ENCODE measurements at regions of chr18 and their contacts with region 1.

Region 1: GRCh38 chr18:35029770-35030169 is 11.4 kb upstream of the MAPRE2 start:
- DNase-seq: no peak
- ATAC-seq: peak; percentile 84
- H3K4me3 Mint-ChIP-seq: peak overlapping the region; percentile 84
- H3K27ac Mint-ChIP-seq: peak overlapping the region; percentile 97
- H3K4me1 Mint-ChIP-seq: peaks cover 41% of the 10 kb centered on the region
- H3K27me3 Mint-ChIP-seq: no peaks in the 10 kb centered on the region
- CTCF ChIP-seq: no peak

Region 2: DNA sequence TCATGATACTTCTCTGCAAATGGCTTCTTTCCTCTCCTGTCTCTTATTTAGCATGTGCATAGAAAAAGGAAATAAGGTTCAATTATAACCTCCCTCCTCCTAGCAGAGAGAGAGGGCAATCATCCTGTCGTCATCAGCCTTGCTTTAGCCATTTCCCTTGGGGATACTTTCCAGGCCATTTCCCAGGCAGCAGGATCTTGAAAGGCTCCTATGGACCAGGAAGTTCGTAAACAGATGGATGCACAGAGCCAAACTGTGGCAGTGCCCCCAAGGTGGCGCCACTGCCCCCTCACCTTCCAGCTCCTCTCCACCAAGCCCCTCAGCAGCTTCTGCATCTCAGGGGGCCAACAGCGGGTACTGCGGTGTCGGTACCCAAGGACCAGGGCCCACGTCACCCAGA is 162.2 kb before region 1 on chr18:
- CTCF ChIA-PET with region 1: no interaction called
- POLR2A ChIA-PET with region 1: no interaction called
- intact Hi-C with region 1: no loop called
- DNase-seq: no peak
- ATAC-seq: no peak
- H3K4me3 Mint-ChIP-seq: no peak overlapping the region
- H3K27ac Mint-ChIP-seq: no peak overlapping the region
- H3K4me1 Mint-ChIP-seq: no peaks in the 10 kb centered on the region
- H3K27me3 Mint-ChIP-seq: peaks cover 3% of the 10 kb centered on the region
- CTCF ChIP-seq: no peak

Region 3: DNA sequence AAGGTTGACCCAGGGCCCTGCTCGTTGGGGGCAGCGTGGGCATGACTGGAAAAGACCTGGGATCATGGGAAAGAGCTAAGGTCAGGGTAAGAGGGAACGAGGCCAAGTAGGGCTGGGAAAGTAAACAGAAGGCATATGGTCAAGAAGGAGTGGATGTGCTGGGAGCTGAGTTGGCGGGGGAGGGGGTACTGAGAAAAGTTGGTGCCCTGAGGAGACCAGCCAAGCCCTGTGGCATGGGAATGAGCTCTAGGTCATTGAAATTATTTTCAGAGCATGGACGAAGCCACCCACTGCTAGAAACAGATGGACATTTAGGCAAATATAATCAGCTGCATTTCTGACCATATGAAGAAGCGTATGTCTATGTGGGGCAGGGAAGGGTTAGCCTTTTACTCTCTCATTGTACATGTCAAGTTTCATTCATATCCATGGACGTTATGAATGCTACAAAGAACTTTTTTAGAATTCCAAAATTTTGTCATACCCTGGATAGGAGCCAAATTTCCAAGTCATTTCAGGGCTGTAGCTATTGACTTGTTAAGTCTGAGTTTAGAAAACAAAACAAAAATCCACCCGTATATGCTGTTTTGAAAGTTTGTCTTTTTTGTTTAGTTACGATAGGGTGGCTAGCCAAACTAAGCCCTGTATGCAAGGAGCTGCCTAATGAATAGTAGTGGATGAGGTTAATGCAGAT is 30.5 kb after region 1 on chr18:
- CTCF ChIA-PET with region 1: interaction called, 12 read pairs
- POLR2A ChIA-PET with region 1: no interaction called
- intact Hi-C with region 1: no loop called
- DNase-seq: no peak
- ATAC-seq: no peak
- H3K4me3 Mint-ChIP-seq: no peak overlapping the region
- H3K27ac Mint-ChIP-seq: no peak overlapping the region
- H3K4me1 Mint-ChIP-seq: peaks cover 46% of the 10 kb centered on the region
- H3K27me3 Mint-ChIP-seq: no peaks in the 10 kb centered on the region
- CTCF ChIP-seq: no peak

Region 4: DNA sequence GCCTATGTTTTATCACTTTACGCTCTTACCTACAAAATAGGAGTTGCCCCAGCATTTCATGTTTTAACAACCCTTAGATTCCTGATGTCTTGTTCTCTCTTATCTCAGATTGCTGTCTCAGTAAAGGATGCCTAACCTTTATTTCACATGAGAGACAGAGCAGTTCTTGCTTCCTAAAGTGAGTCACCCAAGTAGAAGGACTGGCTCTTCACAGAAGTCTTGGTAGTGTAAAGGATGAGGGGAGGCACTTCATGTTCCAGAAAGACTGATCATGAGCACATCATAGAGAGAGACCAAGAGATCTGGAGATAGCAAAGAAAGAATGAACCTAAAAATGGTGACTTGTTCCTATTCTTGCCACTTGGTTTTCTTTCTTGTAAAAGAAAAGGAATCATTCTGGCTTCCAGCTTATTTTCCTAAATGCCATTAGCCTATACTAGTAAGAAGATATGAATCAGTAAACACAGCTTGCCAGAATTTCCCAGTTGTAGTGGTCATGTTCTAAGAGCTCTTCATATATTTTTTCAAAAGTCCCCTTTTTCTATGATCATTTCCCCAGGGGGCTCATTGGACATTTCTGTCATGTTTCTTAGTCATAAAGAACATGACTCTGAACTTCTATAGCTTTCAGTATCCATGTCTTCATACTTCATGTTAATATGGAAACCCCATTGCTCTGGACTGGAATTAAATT is 66.4 kb after region 1 on chr18:
- CTCF ChIA-PET with region 1: no interaction called
- POLR2A ChIA-PET with region 1: interaction called, 11 read pairs
- intact Hi-C with region 1: no loop called
- DNase-seq: no peak
- ATAC-seq: peak; percentile 88
- H3K4me3 Mint-ChIP-seq: peak overlapping the region; percentile 55
- H3K27ac Mint-ChIP-seq: peak overlapping the region; percentile 86
- H3K4me1 Mint-ChIP-seq: peaks cover 35% of the 10 kb centered on the region
- H3K27me3 Mint-ChIP-seq: no peaks in the 10 kb centered on the region
- CTCF ChIP-seq: no peak

Region 5: DNA sequence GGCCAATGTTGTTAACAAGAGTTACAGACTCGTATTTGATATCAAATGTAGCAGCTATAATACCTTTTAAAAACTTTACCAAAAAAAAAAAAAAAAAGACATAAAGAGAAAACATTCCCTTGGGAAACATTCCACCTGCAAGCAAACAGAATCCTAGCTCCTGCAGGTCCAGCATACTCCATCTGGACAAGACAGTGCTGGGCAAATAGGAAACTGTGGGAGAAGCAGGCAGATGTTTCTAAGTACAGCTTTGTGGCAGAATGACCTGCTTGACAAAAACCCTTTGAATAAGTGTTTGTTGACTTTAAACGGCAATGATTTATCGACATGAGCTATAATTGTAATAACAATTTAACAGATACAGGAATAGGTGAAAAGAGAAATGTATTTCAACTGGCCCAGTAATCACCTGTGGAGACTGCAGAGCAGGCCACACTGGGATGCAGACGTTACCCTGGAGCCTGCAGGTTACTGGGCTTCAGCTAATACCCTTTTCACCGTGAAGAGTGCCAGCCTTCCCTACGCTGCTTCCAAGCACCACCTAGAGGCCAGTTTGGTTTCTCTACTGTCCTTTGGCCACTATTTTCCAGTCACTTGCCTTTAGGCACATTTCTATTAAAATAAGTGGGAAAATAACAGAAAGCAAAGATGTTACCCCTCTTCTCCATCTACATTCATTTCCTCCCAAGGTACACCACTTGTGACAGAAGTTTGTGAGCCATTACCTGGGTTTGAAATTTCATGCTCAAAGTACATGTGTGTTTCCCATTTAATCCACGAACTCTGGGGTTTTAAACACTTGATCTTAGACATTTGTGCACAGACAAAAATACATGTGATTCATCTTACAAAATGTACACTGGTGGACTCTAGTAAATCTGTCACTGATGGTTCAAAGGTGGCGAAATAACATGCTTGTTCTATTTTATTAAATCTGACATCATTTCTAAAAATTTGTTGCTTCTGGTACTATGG is 114.1 kb after region 1 on chr18:
- CTCF ChIA-PET with region 1: interaction called, 130 read pairs
- POLR2A ChIA-PET with region 1: interaction called, 4 read pairs
- intact Hi-C with region 1: loop called (anchors 1 kb)
- DNase-seq: no peak
- ATAC-seq: peak; percentile 74
- H3K4me3 Mint-ChIP-seq: no peak overlapping the region
- H3K27ac Mint-ChIP-seq: no peak overlapping the region
- H3K4me1 Mint-ChIP-seq: peaks cover 49% of the 10 kb centered on the region
- H3K27me3 Mint-ChIP-seq: no peaks in the 10 kb centered on the region
- CTCF ChIP-seq: no peak

Region 6: DNA sequence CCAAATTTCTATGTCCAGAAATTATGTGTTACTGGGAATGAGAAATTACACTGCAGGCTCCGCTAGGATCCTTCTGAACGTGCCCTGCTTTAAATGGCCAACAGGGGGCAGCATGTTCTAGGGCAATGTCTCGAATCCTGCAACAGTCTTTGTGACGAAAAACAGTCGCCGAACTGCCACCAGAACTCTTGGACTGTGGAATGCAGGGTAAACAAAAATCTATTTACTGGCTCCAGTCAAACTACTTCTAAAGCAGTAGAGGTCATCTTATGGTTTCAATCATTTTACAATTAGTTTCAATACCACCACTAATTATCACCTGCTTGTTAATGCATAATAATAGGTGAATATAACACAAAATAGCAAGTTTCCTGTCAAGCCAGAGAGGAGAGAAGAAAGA is 201.3 kb after region 1 on chr18:
- CTCF ChIA-PET with region 1: interaction called, 5 read pairs
- POLR2A ChIA-PET with region 1: no interaction called
- intact Hi-C with region 1: loop called (anchors 2 kb)
- DNase-seq: peak; percentile 49
- ATAC-seq: peak; percentile 97
- H3K4me3 Mint-ChIP-seq: peak overlapping the region; percentile 36
- H3K27ac Mint-ChIP-seq: no peak overlapping the region
- H3K4me1 Mint-ChIP-seq: peaks cover 3% of the 10 kb centered on the region
- H3K27me3 Mint-ChIP-seq: no peaks in the 10 kb centered on the region
- CTCF ChIP-seq: peak; percentile 75

Region 7: GRCh38 chr18:35355140-35355618 is 325.4 kb after region 1 on chr18:
- CTCF ChIA-PET with region 1: interaction called, 16 read pairs
- POLR2A ChIA-PET with region 1: no interaction called
- intact Hi-C with region 1: loop called (anchors 1 kb)
- DNase-seq: no peak
- ATAC-seq: peak; percentile 100
- H3K4me3 Mint-ChIP-seq: no peak overlapping the region
- H3K27ac Mint-ChIP-seq: no peak overlapping the region
- H3K4me1 Mint-ChIP-seq: peaks cover 5% of the 10 kb centered on the region
- H3K27me3 Mint-ChIP-seq: no peaks in the 10 kb centered on the region
- CTCF ChIP-seq: no peak

Region 8: DNA sequence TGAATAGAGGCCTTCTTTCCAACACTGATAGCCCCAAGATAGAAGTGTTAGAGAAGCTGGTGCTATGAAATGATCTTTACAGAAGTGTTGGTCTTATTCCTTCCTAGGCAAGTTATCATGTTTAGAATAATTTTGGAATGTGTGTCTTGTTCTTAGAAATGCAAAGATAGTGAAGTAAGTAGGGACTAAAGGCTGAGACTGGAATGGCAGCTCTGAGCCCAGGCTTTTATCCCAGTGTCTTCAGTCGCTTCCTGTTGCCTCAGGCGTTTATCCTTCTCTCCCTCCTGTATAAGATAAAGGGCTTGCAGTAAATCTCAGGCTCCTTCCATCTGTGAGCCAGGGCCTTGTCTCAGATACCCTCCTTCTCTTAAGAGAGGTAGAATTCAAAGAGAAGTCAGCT is 1580.9 kb after region 1 on chr18:
- CTCF ChIA-PET with region 1: no interaction called
- POLR2A ChIA-PET with region 1: no interaction called
- intact Hi-C with region 1: no loop called
- DNase-seq: no peak
- ATAC-seq: no peak
- H3K4me3 Mint-ChIP-seq: no peak overlapping the region
- H3K27ac Mint-ChIP-seq: no peak overlapping the region
- H3K4me1 Mint-ChIP-seq: no peaks in the 10 kb centered on the region
- H3K27me3 Mint-ChIP-seq: no peaks in the 10 kb centered on the region
- CTCF ChIP-seq: no peak

Measured in activated B cell treated with CpG ODN at 0.5 μM for 24 hours (primary cell).